ENCODE measurements at regions of chr18 and their contacts with region 1.

Region 1: DNA sequence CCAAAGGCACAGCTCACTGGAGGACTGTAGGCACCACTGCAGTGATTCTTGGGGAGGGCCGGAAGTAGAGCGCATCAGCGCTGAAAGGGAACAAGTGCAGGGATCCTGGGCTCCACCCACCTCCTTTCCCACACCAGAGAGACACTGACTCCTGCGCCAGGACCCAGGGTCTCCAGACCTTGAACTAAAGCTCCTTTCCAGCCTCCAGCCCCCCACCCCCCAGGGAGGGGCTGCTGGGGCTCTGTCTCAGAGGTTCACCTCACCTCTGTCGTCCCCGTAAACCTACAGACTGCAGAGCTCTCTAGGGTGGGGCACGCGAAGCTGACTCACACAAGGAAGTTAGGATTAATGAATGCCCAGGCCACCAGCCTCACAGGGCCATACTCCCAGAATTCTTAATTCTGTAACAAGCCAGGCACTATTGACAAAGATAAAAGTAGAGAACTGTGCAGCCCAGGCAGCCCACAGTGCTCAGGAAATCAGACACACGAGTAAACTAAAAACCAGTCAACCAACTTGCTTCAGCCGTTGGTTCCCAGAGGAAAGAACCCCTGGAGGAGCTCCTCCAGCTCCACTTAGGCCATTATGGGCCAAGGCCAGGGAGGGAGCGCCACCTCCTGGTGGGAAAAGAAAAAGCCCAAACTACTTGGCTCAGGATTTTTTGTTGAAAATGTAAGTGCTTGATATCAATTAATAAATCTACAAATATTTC is 45.1 kb upstream of the ACAA2 start:
- DNase-seq: peak; percentile 87
- H3K4me3 Mint-ChIP-seq: peak overlapping the region; percentile 51
- H3K27ac Mint-ChIP-seq: peak overlapping the region; percentile 33
- H3K4me1 Mint-ChIP-seq: peaks cover 40% of the 10 kb centered on the region
- H3K27me3 Mint-ChIP-seq: no peaks in the 10 kb centered on the region
- CTCF ChIP-seq: peak; percentile 94

Region 2: DNA sequence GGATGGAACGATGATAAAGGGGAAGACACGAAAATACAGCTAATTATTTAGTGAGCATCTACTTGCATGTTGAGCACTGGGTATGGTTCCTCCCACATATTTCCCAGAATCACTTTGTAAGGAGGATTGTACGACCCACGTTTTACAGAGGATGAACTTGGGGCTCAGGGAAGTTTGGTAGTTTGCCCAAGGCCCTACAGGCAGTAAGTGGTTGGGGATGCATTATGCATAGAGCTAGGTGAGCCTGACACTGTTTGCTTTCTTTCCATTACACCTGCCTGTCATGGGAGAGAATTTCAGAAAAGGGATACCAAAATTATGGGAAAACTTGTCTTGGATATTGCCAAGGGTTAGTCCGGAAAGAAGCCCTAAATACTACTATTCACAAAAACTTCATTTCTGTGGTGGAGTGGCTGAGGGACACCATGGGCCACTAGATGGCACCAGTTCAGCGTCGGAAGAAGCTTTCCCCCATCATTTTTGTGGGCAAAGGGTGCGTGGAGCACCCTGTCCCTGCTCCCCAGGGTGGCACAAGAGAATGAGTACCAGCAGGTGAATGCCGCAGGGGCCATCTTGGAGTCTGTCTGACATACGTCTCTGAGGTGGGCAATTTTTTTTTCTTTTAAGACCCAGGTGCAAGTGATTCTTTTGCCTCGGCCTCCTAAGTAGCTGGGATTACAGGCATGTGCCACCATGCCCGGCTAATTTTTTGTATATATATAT is 347.9 kb before region 1 on chr18:
- CTCF ChIA-PET with region 1: interaction called, 22 read pairs
- intact Hi-C with region 1: loop called (anchors 2 kb)
- DNase-seq: peak; percentile 72
- H3K4me3 Mint-ChIP-seq: no peak overlapping the region
- H3K27ac Mint-ChIP-seq: no peak overlapping the region
- H3K4me1 Mint-ChIP-seq: no peaks in the 10 kb centered on the region
- H3K27me3 Mint-ChIP-seq: peaks cover 25% of the 10 kb centered on the region
- CTCF ChIP-seq: peak; percentile 87

Region 3: GRCh38 chr18:49784427-49785185 is 73.9 kb before region 1 on chr18:
- CTCF ChIA-PET with region 1: interaction called, 6 read pairs
- intact Hi-C with region 1: loop called (anchors 2 kb)
- DNase-seq: no peak
- H3K4me3 Mint-ChIP-seq: no peak overlapping the region
- H3K27ac Mint-ChIP-seq: no peak overlapping the region
- H3K4me1 Mint-ChIP-seq: peaks cover 13% of the 10 kb centered on the region
- H3K27me3 Mint-ChIP-seq: no peaks in the 10 kb centered on the region
- CTCF ChIP-seq: peak; percentile 25

Region 4: GRCh38 chr18:49813319-49814146 is 44.9 kb before region 1 on chr18 and contains the start of gene ACAA2:
- CTCF ChIA-PET with region 1: interaction called, 10 read pairs
- intact Hi-C with region 1: no loop called
- DNase-seq: peak; percentile 89
- H3K4me3 Mint-ChIP-seq: peak within 1 kb of the TSS; percentile 74
- H3K27ac Mint-ChIP-seq: peak within 1 kb of the TSS; percentile 79
- H3K4me1 Mint-ChIP-seq: peaks cover 34% of the 10 kb centered on the region
- H3K27me3 Mint-ChIP-seq: no peaks in the 10 kb centered on the region
- CTCF ChIP-seq: no peak
- total RNA-seq, gene ACAA2: 77.1 and 79.9 TPM in 2 replicates

Region 5: DNA sequence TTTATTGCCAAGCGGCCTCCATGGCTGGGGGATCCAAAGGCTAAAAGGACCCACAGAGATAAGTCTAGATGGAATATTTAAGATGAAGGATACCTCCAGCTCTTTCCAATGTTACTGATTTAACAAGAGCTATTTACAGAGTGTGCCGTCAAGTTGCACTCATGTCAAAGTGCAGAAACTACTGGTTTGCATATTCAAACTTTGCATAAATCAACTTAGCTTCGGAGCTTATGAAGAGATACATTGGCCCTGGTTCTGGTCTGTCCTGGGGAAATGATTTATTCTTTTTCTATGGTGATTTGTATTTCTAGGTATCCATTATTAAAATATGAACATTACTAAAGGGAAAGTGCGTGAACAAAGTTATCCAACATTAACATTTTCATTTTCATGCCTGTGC is 350.8 kb after region 1 on chr18:
- CTCF ChIA-PET with region 1: no interaction called
- intact Hi-C with region 1: no loop called
- DNase-seq: no peak
- H3K4me3 Mint-ChIP-seq: no peak overlapping the region
- H3K27ac Mint-ChIP-seq: no peak overlapping the region
- H3K4me1 Mint-ChIP-seq: peaks cover 5% of the 10 kb centered on the region
- H3K27me3 Mint-ChIP-seq: peaks cover 44% of the 10 kb centered on the region
- CTCF ChIP-seq: no peak